PC-9 (cell line): ENCODE measurements at regions of chr2 and their contacts with region 1.

Region 1: GRCh38 chr2:221104361-221104811 is 467.7 kb downstream of the EPHA4 start:
- DNase-seq: no peak
- H3K4me3 ChIP-seq: no peak overlapping the region
- H3K27ac ChIP-seq: no peak overlapping the region
- H3K4me1 ChIP-seq: no peaks in the 10 kb centered on the region
- H3K27me3 ChIP-seq: no peaks in the 10 kb centered on the region
- CTCF ChIP-seq: no peak

Region 2: GRCh38 chr2:221134718-221135117 is 30.3 kb after region 1 on chr2:
- CTCF ChIA-PET with region 1: no interaction called
- POLR2A ChIA-PET with region 1: interaction called, 42 read pairs
- intact Hi-C with region 1: no loop called
- DNase-seq: no peak
- H3K4me3 ChIP-seq: no peak overlapping the region
- H3K27ac ChIP-seq: no peak overlapping the region
- H3K4me1 ChIP-seq: no peaks in the 10 kb centered on the region
- H3K27me3 ChIP-seq: no peaks in the 10 kb centered on the region
- CTCF ChIP-seq: no peak